CD8-positive, alpha-beta memory T cell (primary cell): ENCODE measurements at regions of chr5 and their contacts with region 1.

Region 1: DNA sequence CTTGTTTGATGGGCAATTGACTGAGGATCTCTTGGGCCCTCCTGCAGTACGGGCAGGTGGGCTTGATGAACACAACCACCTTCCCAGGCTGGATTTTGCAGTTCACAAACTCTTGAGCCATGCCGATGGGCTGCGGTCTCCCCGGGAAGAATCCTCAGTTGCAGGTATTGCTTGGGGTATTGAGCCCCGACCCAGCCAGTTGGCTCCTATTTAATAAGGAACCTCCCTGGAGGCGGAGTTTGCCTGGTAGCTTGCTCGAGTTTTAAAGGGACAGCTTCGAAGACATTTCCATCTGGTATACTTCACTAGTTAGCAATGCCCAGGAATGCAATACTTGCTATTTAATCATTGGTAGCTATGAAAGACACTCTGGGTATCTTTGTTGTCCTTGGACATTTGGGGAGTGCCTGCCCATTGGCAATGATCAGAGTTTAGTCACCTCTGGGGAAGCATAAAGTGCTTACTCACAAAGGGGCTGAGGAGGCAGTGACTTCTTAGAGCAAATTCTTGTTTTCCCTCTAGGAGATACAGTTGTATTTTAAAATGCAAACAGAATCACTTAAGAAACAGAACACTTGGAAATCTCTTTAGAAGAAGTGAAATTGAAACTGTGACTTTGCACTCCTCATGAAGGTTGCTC is at the start of gene GLRX:
- DNase-seq: peak; percentile 45 to 70 (median 59)
- H3K4me3 ChIP-seq: peak within 1 kb of the TSS; percentile 96
- H3K4me3 Mint-ChIP-seq: peak within 1 kb of the TSS; percentile 97 to 100 (median 99)
- H3K27ac ChIP-seq: peak within 1 kb of the TSS; percentile 25
- H3K27ac Mint-ChIP-seq: peak within 1 kb of the TSS; percentile 65 to 100 (median 94)
- H3K4me1 ChIP-seq: peaks cover 49% of the 10 kb centered on the region
- H3K4me1 Mint-ChIP-seq: peaks cover 58 to 71% (median 63%) of the 10 kb centered on the region in 3 donors
- H3K27me3 ChIP-seq: no peaks in the 10 kb centered on the region
- H3K27me3 Mint-ChIP-seq: no peaks in the 10 kb centered on the region
- total RNA-seq, gene GLRX: 22.2 to 25.0 TPM

Region 2: DNA sequence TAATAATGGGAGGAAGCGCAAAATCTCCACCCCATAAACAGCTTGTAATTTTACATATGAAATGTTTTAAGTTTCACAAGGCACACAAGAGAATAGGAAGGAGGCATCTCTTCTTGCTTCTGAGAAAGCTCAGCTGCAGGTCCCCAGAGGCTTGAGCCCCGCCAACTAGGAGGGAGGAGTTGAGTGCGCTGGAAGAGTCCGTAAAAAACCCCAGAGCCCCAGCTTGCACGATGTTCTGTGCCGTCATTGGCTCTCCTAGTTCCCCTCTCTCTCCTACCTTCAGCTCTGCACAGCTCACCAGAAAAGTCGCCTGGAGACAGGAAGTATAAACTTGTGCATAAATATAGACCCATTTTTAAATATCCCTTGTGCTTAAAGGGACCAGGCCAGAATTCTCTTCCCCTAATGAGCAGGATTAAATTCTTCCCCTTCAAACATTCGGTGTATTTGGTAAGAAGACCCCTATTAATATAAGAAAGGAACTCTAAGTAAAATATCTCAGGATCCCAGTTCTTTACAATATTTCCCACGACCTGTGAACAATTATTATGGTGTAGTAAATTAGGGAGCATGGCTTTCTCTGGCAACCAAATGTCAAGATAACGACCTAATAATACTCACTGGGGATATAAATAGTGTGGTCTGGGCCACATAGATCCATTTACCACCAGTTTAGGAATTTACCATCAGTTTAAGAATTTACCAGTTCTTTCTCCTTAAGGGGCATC is 13.8 kb before region 1 on chr5:
- CTCF ChIA-PET with region 1: interaction called, 85 read pairs
- POLR2A ChIA-PET with region 1: interaction called, 72 read pairs
- DNase-seq: peak; percentile 67 to 90 (median 86)
- H3K4me3 ChIP-seq: peak overlapping the region; percentile 31
- H3K4me3 Mint-ChIP-seq: peak overlapping the region; percentile 20 to 82 (median 71)
- H3K27ac ChIP-seq: peak overlapping the region; percentile 4
- H3K27ac Mint-ChIP-seq: peak overlapping the region; percentile 65 to 96 (median 87)
- H3K4me1 ChIP-seq: peaks cover 57% of the 10 kb centered on the region
- H3K4me1 Mint-ChIP-seq: peaks cover 60 to 65% (median 61%) of the 10 kb centered on the region in 3 donors
- H3K27me3 ChIP-seq: no peaks in the 10 kb centered on the region
- H3K27me3 Mint-ChIP-seq: no peaks in the 10 kb centered on the region

Region 3: DNA sequence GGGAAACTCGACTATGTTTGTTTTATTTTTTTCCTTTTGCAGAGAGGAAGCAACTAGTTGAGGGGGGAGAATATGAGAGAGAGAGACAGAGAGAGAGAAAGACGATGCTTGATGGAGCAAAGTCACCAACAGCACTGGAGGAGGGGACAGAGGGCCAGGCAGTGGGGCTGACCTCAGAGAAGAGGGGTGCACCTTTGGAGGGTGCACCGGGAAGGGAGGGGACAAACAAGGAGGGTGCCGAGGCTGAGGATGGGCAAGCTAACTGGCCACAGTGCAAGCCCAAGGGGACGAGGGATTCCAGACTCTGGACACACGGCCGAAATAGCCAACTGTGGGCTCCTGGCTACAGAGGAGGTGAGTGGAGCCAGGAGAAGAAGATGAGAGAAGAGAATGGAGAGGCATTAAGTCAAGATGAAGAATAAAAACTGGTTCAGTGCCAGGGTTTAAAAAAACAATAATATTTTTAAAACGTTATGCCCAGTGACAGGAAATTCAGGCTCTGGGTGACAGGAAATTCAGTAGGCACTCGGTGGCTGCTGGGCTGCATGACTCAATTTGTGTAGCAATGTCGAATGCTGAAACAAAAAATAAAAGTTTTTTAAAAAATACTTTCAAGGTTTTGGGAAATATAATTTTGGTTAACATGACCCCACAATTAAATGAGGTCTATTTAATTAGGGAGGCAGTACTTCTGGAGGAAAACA is 13.2 kb after region 1 on chr5:
- CTCF ChIA-PET with region 1: interaction called, 105 read pairs
- POLR2A ChIA-PET with region 1: interaction called, 18 read pairs
- DNase-seq: peak in 2 of 5 donors; percentile 37 to 57
- H3K4me3 ChIP-seq: peak overlapping the region; percentile 61
- H3K4me3 Mint-ChIP-seq: peak overlapping the region; percentile 82 to 96 (median 87)
- H3K27ac ChIP-seq: peak overlapping the region; percentile 49
- H3K27ac Mint-ChIP-seq: peak overlapping the region; percentile 76 to 98 (median 94)
- H3K4me1 ChIP-seq: peaks cover 33% of the 10 kb centered on the region
- H3K4me1 Mint-ChIP-seq: peaks cover 42 to 51% (median 47%) of the 10 kb centered on the region in 3 donors
- H3K27me3 ChIP-seq: no peaks in the 10 kb centered on the region
- H3K27me3 Mint-ChIP-seq: no peaks in the 10 kb centered on the region

Region 4: DNA sequence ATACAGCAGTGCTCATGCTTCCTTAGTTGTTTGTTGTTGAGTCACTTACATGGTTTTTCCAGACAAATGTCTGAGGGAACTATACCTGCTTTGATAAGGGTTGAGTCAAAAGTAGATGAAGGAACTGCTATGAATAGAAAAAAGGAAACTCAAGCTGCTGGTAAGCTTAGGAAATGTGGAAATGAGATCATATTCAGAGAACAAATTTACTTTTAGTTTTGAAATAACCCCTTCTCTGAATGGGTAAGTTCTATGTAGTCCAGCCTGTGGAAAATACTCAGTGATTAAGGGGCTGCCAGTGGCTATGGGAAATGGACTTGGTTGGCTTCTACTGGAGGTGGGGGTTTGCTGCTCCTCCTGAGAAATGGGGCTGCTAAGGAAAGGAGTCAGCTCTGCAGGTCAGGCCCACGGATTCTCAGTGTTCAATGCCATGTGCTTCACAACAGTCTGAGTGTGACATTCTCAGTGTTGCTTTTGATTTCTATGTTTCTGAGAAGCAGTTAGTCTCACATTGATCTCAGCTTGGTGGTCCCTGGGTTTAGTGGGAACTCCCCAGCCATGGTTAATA is 47.5 kb after region 1 on chr5:
- CTCF ChIA-PET with region 1: interaction called, 5 read pairs
- POLR2A ChIA-PET with region 1: interaction called, 10 read pairs
- DNase-seq: no peak
- H3K4me3 ChIP-seq: no peak overlapping the region
- H3K4me3 Mint-ChIP-seq: peak overlapping the region in 6 of 7 donors; percentile 29 to 86 (median 44)
- H3K27ac ChIP-seq: no peak overlapping the region
- H3K27ac Mint-ChIP-seq: peak overlapping the region in 5 of 8 donors; percentile 46 to 81 (median 63)
- H3K4me1 ChIP-seq: peaks cover 35% of the 10 kb centered on the region
- H3K4me1 Mint-ChIP-seq: peaks cover 26 to 34% (median 34%) of the 10 kb centered on the region in 3 donors
- H3K27me3 ChIP-seq: no peaks in the 10 kb centered on the region
- H3K27me3 Mint-ChIP-seq: peaks cover 0 to 5% of the 10 kb centered on the region in 2 donors